Activated CD8-positive, alpha-beta T cell treated with anti-CD3 and anti-CD28 coated beads, Interleukin-2, amount 10 ng/mL, durations not matched to agents 7 days and 5 days (primary cell): ENCODE measurements at regions of chr18 and their contacts with region 1.

Region 1: DNA sequence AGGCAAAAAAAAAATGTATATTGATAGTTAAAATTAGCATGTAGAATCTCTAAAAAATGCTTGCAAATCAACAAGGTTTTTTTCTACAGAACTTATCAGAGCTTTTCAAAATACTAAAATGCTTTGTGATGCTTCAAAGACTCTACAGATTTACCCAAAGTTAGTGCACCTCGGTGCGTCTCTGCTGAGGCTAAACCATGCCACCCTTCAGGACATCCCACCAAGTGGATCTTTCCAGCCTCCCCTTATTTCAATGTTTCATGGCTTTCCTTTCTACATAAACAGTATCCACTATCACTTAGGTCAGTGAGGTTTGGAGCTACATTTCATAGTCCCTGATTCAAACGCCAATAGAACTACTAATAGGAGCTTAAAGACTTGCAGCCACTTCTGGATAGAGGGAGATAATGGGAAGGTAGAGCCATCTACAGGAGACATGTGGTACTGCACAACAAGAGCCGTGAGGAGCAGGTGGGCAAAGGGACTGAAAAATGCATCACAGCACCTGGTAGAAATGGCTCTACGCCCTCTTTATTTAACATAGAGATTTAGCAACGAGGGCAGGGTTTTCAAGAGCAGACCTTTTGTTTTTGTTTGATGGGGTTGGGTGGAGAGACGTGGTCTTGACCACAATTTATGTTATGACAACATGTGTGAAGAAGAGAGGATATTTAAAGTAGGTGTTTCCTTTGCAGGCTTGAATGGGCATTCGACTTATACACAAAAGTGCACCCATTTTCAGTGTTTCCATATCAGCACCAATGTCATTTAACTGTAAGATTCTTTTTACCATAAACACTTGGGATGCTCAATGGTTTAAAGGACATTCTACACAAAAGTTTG is 56.1 kb upstream of the SLC35G4 start:
- DNase-seq: peak; percentile 58
- ATAC-seq: peak; percentile 69
- H3K4me3 Mint-ChIP-seq: no peak overlapping the region
- H3K27ac Mint-ChIP-seq: no peak overlapping the region
- H3K4me1 Mint-ChIP-seq: peaks cover 2% of the 10 kb centered on the region
- H3K27me3 Mint-ChIP-seq: peaks cover 14% of the 10 kb centered on the region

Region 2: DNA sequence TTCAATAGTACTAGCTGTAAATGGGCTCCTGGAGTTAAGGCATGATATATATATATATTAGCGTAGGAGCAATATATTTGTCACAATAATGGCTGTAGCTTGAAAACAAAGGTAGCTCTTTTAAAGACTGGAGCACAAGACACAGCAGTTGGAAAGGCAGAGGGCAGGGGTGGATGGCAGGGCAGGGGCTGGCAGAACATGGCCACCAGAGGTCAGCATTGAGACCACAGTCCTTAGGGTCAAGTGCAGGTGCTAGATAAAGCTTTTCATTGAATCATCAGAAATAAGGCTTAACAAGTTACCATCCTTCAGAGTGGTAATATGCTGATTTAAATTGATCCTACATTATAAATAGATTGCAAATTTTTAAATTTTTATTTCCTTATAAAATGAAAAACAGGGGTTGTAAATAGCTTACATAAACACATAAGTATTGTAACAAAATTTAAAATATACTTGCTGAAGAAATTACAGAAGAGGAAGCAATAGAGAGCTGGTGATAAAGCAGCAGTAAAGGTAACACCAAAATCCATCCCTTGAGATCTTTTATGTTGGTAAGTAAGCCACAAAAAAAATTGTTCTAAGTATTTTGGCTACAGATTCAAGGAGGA is 242.7 kb before region 1 on chr18:
- CTCF ChIA-PET with region 1: interaction called, 31 read pairs
- POLR2A ChIA-PET with region 1: no interaction called
- DNase-seq: peak; percentile 50
- ATAC-seq: no peak
- H3K4me3 Mint-ChIP-seq: no peak overlapping the region
- H3K27ac Mint-ChIP-seq: no peak overlapping the region
- H3K4me1 Mint-ChIP-seq: peaks cover 5% of the 10 kb centered on the region
- H3K27me3 Mint-ChIP-seq: no peaks in the 10 kb centered on the region

Region 3: GRCh38 chr18:11398625-11399024 is 154.7 kb before region 1 on chr18:
- CTCF ChIA-PET with region 1: no interaction called
- POLR2A ChIA-PET with region 1: no interaction called
- DNase-seq: no peak
- ATAC-seq: no peak
- H3K4me3 Mint-ChIP-seq: no peak overlapping the region
- H3K27ac Mint-ChIP-seq: no peak overlapping the region
- H3K4me1 Mint-ChIP-seq: no peaks in the 10 kb centered on the region
- H3K27me3 Mint-ChIP-seq: no peaks in the 10 kb centered on the region

Region 4: DNA sequence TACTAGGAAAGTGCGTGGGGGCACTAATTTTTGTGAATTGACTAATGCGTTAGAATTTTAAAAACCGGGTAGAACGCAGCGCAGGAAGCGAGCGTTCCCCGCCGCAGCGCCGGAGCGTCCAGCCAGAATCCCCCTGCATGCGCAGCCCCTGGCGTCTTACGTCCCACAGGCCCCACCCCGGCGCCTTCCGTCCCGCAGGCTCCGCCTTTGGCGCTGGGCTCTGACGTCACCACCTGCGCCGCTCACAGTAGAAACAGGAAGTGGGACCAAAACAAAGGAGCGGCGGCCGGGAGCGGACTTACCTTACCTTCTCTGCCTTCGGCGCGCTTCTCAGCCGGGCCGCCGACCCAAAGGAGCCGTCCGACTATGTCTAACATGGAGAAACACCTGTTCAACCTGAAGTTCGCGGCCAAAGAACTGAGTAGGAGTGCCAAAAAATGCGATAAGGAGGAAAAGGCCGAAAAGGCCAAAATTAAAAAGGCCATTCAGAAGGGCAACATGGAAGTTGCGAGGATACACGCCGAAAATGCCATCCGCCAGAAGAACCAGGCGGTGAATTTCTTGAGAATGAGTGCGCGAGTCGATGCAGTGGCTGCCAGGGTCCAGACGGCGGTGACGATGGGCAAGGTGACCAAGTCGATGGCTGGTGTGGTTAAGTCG is 298.0 kb after region 1 on chr18 and contains the start of gene CHMP1B:
- CTCF ChIA-PET with region 1: no interaction called
- POLR2A ChIA-PET with region 1: no interaction called
- DNase-seq: peak; percentile 98
- ATAC-seq: peak; percentile 91
- H3K4me3 Mint-ChIP-seq: peak within 1 kb of the TSS; percentile 100
- H3K27ac Mint-ChIP-seq: peak within 1 kb of the TSS; percentile 100
- H3K4me1 Mint-ChIP-seq: peaks cover 28% of the 10 kb centered on the region
- H3K27me3 Mint-ChIP-seq: peaks cover 5% of the 10 kb centered on the region
- total RNA-seq, gene CHMP1B: 21.1 to 22.8 TPM